Left colon (tissue), 2 donors: ENCODE measurements at regions of chr2 and their contacts with region 1.

Region 1: DNA sequence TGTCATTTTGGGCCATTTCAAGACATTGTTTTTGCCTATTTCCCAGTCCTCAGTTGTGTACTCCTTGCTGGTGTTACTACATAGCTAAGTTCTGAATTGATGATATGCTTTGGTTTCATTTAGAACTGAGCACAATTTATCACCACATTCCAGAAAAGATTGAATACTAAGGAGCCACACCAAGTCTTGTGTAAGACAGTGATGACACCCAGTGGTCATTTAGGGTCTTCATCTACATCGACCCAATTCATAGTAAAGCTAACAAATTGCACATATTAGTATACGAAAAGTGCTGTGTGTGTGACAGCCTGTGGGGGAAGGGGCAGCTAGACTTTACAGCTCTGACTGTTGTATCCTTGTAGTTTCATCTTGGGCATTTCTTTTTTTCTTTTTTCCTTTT is 10.9 kb upstream of the DLX2 start:
- DNase-seq: no peak
- ATAC-seq: no peak

Region 2: GRCh38 chr2:171598713-171599319 is 514.8 kb before region 1 on chr2:
- intact Hi-C with region 1: loop called in 1 of 2 experiments (anchors 10 kb)
- DNase-seq: peak in 1 of 2 donors; percentile 15
- ATAC-seq: peak; percentile 82